ENCODE measurements at regions of chr15 and their contacts with region 1.

Region 1: GRCh38 chr15:91706322-91707032 is 147.0 kb upstream of the SLCO3A1 start:
- DNase-seq: peak; percentile 36
- H3K4me3 ChIP-seq: no peak overlapping the region
- H3K27ac ChIP-seq: no peak overlapping the region
- H3K27me3 ChIP-seq: peaks cover 2% of the 10 kb centered on the region
- CTCF ChIP-seq: peak; percentile 94

Region 2: GRCh38 chr15:91694831-91695210 is 11.7 kb before region 1 on chr15:
- CTCF ChIA-PET with region 1: interaction called, 64 read pairs
- POLR2A ChIA-PET with region 1: no interaction called
- DNase-seq: peak; percentile 15
- H3K4me3 ChIP-seq: peak overlapping the region; percentile 45
- H3K27ac ChIP-seq: peak overlapping the region; percentile 66
- H3K27me3 ChIP-seq: no peaks in the 10 kb centered on the region
- CTCF ChIP-seq: no peak

Region 3: DNA sequence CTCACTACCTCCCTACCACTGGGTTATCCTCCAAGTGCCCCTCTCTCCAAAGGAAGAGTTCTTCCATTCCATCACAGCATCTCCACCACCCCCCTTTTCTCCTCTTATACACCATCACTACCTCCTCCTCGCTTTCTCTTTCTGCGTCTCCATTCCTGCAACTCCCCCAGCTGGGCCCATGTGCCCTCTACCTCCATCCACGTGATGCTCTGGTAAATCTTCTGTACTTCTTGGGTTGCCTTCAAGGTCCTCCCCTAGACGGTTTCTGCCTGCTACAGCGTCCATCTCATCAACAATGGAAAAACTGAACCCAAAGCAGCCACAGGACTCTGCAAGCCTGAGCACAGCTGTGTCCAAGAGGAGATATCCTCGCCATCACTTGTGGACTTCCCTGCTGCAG is 17.5 kb after region 1 on chr15:
- CTCF ChIA-PET with region 1: interaction called, 17 read pairs
- POLR2A ChIA-PET with region 1: no interaction called
- DNase-seq: no peak
- H3K4me3 ChIP-seq: no peak overlapping the region
- H3K27ac ChIP-seq: no peak overlapping the region
- H3K27me3 ChIP-seq: no peaks in the 10 kb centered on the region
- CTCF ChIP-seq: no peak

Region 4: DNA sequence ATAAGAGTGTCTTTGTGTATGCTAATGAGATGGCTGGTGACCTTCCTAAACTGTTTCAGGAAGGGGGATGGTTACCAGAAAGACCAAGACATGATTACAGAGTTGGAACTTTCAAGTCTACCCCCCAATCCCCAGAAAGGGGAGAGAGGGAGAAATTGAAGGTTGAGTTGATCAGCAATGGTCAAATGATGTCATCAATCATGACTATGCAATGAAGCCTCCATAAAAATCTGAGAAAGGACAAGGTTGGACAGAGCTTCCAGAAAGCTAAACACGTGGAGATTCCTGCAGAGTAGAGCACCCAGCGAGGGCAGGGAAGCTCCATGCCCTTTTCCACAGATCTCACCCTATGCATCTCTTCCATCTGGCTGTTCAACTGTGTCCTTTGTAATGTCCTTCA is 124.5 kb after region 1 on chr15:
- CTCF ChIA-PET with region 1: no interaction called
- POLR2A ChIA-PET with region 1: no interaction called
- DNase-seq: no peak
- H3K4me3 ChIP-seq: no peak overlapping the region
- H3K27ac ChIP-seq: no peak overlapping the region
- H3K27me3 ChIP-seq: peaks cover 3% of the 10 kb centered on the region
- CTCF ChIP-seq: no peak

Region 5: GRCh38 chr15:91942676-91943576 is 236.4 kb after region 1 on chr15:
- CTCF ChIA-PET with region 1: interaction called, 16 read pairs
- POLR2A ChIA-PET with region 1: no interaction called
- DNase-seq: peak; percentile 72
- H3K4me3 ChIP-seq: no peak overlapping the region
- H3K27ac ChIP-seq: no peak overlapping the region
- H3K27me3 ChIP-seq: no peaks in the 10 kb centered on the region
- CTCF ChIP-seq: no peak

Region 6: DNA sequence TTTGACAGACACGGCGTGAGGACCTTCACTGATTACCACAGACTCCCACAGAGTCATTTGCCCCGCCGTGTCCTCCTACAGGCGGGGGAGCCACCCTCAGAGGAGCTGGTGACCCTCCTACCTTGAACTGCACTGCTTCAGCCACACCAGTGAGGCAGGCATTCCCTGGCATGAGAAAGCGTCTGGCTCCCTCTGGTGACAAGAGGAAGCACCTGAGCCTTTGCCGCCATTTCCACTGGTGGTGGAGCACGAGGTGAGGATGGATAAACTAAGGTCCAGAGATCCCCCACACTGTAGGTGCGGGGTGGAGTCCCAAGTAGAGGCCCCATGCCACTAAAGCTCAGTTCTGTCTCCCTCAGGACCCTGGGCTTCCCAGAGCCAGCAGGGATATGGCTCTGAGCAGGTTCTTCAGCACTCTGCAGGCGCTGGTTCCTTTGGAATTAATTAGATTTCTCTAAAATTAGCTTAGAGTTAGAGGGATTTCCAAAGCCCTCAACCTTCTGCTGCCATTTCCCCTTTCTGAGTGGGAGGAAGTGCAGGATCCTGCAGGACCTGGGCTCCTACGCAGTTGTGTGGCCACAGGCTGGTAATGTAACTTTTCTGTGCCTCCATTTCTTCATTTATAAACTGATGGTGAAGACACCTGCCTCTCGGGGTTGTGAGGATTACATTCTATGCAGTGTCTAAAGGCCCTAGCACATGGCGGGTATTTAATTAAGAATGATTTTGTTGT is 371.0 kb after region 1 on chr15:
- CTCF ChIA-PET with region 1: interaction called, 45 read pairs
- POLR2A ChIA-PET with region 1: no interaction called
- DNase-seq: no peak
- H3K4me3 ChIP-seq: no peak overlapping the region
- H3K27ac ChIP-seq: no peak overlapping the region
- H3K27me3 ChIP-seq: no peaks in the 10 kb centered on the region
- CTCF ChIP-seq: peak; percentile 77

Measured in AG04450 (cell line).